ENCODE measurements at regions of chr12 and their contacts with region 1.

Region 1: DNA sequence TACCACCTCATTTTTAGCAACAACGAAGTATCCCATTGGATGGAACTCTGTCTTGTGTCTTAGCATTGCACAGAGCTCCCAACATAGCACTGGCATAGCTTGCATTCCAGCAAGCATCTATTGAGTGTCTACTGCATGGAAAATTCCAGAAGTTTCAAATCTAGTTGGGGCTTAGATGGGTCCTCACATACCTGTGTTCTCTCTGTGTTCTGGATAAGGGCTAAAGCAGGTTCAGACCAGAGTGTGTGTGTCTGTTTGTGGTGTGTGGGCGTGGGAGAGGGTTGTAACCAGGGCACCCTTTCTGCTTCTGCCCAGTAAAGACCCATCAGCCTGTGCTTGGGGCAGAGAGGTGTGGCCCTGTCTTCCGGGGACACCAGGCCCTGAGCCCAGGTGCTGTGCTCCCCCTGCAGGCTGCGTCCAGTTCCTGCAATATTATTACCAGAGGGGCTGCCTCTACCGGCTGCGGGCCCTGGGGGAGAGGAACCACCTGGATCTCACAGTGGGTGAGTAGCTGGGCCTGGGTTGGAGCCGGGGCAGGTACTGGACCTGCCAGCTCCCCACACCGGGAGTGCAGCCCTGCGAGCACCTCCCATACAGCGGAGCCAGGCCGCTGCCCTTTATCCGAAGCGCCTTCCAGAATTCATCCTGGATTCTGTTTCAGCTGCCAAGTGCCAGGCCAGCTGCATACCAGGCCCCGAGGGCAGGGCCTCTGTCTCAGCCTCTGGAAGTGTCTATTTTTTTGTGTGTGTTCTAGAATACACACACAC is 20.3 kb downstream of the RHOF start:
- DNase-seq: peak; percentile 86
- H3K4me3 Mint-ChIP-seq: no peak overlapping the region
- H3K27ac Mint-ChIP-seq: peak overlapping the region; percentile 64
- H3K4me1 Mint-ChIP-seq: peaks cover 16% of the 10 kb centered on the region
- H3K27me3 Mint-ChIP-seq: no peaks in the 10 kb centered on the region

Region 2: DNA sequence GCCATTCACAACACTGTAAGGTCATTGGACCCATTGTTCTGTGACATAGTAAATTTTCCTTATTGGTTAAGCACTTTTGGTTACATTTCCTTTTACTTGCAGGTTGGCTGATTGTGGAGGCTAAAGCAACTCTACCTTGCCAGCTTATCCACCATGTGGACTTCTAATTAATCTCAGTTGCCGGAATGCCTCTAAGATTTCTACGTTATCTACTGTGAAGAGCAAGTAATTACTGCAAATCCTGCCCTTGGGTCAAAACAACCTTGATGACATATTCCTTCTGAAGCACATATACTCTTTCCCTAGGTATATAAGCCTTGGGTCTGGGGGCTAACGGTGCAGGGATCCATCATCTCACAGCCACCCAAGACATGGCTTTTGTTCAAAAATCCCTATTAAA is 84.2 kb before region 1 on chr12:
- CTCF ChIA-PET with region 1: interaction called, 10 read pairs
- POLR2A ChIA-PET with region 1: no interaction called
- DNase-seq: no peak
- H3K4me3 Mint-ChIP-seq: no peak overlapping the region
- H3K27ac Mint-ChIP-seq: no peak overlapping the region
- H3K4me1 Mint-ChIP-seq: peaks cover 15% of the 10 kb centered on the region
- H3K27me3 Mint-ChIP-seq: peaks cover 2% of the 10 kb centered on the region

Region 3: DNA sequence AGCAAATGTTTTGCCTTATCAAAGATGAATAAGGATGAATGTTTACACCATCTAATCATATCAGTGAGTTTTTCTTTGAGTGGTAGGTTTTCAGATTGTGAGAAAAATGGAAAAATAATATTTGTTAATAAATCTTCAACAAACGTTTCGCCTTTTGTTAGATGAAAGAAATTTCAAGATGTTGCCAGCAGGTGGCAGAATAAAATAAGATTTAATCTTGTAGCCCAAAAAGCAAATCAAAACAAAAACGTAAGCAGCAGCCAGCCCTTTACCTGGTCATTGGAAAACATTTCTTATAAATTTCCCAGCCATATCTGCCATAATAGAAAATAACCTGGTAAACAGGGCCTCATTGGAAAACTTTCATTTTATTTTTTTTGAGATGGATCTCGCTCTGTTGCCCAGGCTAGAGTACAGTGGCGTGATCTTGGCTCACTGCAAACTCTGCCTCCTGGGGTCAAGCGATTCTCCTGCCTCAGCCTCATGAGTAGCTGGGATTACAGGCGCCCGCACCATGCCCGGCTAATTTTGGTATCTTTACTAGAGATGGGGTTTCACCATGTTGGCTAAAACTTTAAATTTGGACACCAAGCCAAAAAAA is 76.0 kb before region 1 on chr12:
- CTCF ChIA-PET with region 1: interaction called, 14 read pairs
- POLR2A ChIA-PET with region 1: interaction called, 3 read pairs
- DNase-seq: no peak
- H3K4me3 Mint-ChIP-seq: no peak overlapping the region
- H3K27ac Mint-ChIP-seq: no peak overlapping the region
- H3K4me1 Mint-ChIP-seq: peaks cover 2% of the 10 kb centered on the region
- H3K27me3 Mint-ChIP-seq: no peaks in the 10 kb centered on the region

Region 4: DNA sequence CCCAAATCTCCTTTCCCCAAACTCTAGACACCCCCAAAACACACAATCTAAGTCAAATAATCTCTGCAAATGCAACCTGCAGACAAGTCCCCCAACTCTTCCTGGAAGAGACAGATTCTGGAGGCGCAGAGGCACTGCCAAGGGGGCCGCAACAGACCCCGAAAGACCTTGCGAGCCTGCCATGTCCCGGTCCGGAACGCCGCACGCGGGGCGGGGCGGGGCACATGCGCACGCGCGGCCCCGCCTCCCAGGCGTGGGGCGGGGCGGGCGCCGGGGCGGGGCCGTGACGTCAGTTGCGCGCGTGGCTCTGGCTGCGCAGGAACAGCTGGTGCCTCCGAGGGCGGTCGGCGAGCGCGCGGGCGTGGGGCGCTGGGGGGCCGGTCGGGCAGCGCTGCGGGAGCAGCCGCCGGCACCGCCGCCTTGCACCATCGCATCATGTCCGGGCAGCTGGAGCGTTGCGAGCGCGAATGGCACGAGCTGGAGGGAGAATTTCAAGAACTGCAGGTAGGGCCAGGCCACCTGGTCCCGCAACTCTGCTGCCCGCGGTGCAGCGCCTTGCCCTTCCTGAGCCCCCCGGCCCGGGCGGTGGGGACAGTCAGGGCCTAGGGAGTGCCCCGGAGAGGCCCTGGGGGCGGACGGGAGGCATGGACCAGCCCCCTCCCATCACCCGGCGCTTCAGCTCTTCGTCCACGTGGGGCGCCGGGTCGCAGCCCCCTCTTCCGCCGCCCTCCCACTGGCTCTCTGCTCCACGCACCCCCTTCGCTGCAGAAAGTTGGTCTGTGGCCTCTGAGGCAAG is 60.5 kb before region 1 on chr12 and contains the start of gene TMEM120B:
- CTCF ChIA-PET with region 1: interaction called, 16 read pairs
- POLR2A ChIA-PET with region 1: interaction called, 4 read pairs
- DNase-seq: peak; percentile 87
- H3K4me3 Mint-ChIP-seq: peak within 1 kb of the TSS; percentile 93
- H3K27ac Mint-ChIP-seq: peak within 1 kb of the TSS; percentile 88
- H3K4me1 Mint-ChIP-seq: peaks cover 25% of the 10 kb centered on the region
- H3K27me3 Mint-ChIP-seq: no peaks in the 10 kb centered on the region
- total RNA-seq, gene TMEM120B: 5.1 to 5.8 TPM

Region 5: DNA sequence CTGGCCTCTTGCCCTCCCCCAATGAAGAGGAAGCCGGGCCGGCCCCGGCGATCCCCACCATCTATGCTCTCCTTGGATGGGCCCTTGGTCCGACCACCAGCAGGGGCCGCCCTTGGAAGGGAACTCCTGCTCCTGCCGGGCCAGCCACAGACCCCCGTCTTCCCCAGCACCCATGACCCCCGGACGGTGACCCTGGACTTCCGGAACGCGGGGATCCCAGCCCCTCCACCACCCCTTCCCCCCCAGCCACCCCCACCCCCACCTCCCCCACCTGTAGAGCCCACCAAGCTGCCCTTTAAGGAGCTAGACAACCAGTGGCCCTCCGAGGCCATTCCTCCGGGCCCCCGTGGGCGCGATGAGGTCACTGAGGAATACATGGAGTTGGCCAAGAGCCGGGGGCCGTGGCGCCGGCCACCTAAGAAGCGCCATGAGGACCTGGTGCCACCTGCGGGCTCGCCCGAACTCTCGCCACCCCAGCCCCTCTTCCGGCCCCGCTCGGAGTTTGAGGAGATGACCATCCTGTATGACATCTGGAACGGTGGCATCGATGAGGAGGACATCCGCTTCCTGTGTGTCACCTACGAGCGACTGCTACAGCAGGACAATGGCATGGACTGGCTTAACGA is 50.0 kb after region 1 on chr12:
- CTCF ChIA-PET with region 1: no interaction called
- POLR2A ChIA-PET with region 1: no interaction called
- DNase-seq: no peak
- H3K4me3 Mint-ChIP-seq: no peak overlapping the region
- H3K27ac Mint-ChIP-seq: no peak overlapping the region
- H3K4me1 Mint-ChIP-seq: no peaks in the 10 kb centered on the region
- H3K27me3 Mint-ChIP-seq: no peaks in the 10 kb centered on the region

Measured in activated CD4-positive, alpha-beta memory T cell treated with anti-CD3 and anti-CD28 coated beads, Interleukin-2, amount 10 ng/mL, durations not matched to agents 7 days and 5 days (primary cell).